H1 (cell line): ENCODE measurements at regions of chr10 and their contacts with region 1.

Region 1: DNA sequence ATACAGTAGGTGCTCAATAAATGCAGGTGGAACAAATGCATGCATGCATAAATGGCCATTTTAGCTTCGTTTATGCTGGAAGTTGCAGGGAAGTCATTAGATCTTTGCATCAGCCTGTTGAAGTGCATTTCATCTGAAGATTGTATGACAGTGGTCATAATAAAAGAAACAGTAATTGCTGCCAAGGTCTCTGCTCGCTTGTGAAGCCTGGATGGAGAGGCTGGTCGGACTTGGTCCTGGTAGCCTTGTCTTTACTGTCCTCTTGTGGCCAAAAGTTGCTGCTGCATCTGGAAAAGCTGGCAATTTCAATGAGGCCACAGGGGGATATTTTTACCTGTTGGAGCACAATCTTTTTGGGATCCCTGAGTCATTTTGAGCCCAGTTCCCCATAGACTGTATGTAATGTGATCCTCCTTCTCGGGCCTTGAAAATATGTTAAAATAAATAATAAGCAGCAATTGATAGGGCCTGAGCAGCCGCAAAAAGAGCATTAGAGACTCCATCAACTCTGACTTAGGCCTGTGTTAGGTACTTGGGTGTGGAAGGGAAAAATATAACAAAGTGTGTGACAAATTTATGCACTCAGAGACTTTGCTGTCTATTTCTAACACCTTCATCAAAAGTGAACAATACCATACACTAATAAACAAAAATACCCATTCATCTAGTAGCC is 31.6 kb upstream of the HABP2 start:
- DNase-seq: peak in 1 of 2 experiments; percentile 75
- H3K4me3 ChIP-seq: no peak overlapping the region
- H3K27ac ChIP-seq: no peak overlapping the region
- H3K4me1 ChIP-seq: no peaks in the 10 kb centered on the region
- H3K27me3 ChIP-seq: no peaks in the 10 kb centered on the region; a peak in 1 of 7 replicates
- CTCF ChIP-seq: peak; percentile 79 to 98 (median 96)
- EP300 ChIP-seq: no peak
- POLR2A ChIP-seq: no peak
- RAD21 ChIP-seq: peak; percentile 97 to 98

Region 2: GRCh38 chr10:113322843-113323242 is 198.4 kb before region 1 on chr10:
- CTCF ChIA-PET with region 1: no interaction called
- POLR2A ChIA-PET with region 1: no interaction called
- DNase-seq: no peak
- H3K4me3 ChIP-seq: no peak overlapping the region
- H3K27ac ChIP-seq: no peak overlapping the region
- H3K4me1 ChIP-seq: peaks cover 2 to 11% (median 8%) of the 10 kb centered on the region in 4 experiments; a peak in 5 of 7 replicates
- H3K27me3 ChIP-seq: no peaks in the 10 kb centered on the region
- CTCF ChIP-seq: no peak
- EP300 ChIP-seq: no peak
- POLR2A ChIP-seq: no peak
- RAD21 ChIP-seq: no peak

Region 3: DNA sequence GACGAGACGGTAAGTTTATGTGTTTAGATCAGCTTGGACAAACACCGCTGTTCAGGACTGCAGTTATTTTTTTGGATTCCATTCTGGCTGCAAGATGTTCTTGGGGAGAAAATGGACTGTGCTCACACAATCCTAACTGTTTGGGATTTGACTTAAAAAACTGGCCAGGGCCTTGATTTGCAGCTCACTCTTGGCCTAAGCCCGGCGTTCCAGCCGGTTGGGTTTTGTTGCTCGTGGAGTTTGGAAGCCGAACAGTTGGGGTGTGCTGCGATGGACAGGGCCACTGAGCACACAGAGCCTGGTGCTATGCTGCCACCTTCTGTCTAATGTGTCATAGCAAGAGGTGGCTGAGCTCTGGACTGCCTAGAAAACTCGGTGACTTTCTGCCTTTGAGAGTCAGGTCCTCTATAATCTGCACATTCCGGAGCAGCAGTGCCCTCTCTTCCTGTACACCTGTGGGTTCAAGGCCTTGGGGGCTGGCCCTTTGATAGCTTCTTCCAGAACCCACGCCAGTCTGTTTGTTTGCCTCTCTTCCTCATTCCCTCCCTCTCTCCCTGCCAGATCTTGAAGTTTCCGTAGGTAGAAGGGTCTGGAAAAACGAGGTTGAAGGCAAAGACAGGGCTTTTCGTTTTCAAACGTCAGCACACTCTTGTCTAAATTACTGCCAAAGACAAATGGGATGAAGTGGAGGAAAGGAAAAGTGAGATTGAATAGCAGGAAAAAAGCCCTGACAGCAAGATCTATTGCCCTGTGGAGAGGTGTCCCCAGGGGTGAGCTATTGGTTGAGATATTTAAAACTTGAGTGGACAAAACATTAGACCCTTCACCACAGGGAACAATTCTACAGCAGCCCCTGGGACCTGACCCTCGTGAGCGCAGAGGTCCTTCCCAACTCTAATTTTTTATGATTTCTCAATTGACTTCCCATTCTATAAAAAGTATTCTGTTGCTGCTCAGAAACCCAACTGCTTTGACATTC is 135.9 kb before region 1 on chr10:
- CTCF ChIA-PET with region 1: interaction called, 22 read pairs
- POLR2A ChIA-PET with region 1: no interaction called
- DNase-seq: peak; percentile 65 to 71
- H3K4me3 ChIP-seq: no peak overlapping the region
- H3K27ac ChIP-seq: no peak overlapping the region
- H3K4me1 ChIP-seq: no peaks in the 10 kb centered on the region
- H3K27me3 ChIP-seq: no peaks in the 10 kb centered on the region
- CTCF ChIP-seq: peak; percentile 80 to 93 (median 86)
- EP300 ChIP-seq: no peak
- POLR2A ChIP-seq: no peak
- RAD21 ChIP-seq: peak; percentile 98 to 99

Region 4: DNA sequence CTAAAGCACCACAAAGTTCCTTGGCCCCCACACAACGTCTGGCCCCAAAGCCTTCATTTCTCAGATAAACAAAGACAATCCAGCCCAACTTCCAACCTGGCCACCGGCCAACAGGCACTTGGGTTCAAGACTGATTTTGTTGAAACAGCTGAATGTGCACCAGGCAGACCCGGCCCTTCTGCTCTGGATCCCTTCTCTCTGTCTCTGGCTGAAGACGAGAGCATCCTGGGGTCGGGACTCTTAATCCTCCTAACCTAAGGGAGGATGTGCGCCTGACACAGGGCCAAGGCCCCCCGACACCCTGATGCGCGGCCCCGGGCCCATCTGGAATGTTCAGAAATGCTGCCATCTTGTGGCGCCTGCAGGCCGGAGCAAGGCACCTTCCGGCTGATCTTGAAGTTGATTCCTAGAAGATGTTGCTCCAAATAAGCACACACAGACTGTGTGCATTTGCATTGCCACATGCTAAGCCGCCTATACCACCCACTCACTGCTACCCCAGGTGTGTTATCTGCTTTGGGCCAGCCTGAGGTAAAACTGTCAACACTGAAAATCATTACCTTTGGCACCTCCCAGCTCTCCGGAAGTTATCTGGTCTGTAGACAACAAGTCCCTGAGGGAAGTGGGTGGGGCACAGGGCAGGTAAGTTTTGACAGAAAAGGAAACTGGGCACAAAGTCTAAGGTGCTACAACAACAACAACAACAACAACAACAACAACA is 66.8 kb before region 1 on chr10:
- CTCF ChIA-PET with region 1: interaction called, 35 read pairs
- POLR2A ChIA-PET with region 1: no interaction called
- DNase-seq: peak; percentile 33 to 88
- H3K4me3 ChIP-seq: no peak overlapping the region
- H3K27ac ChIP-seq: no peak overlapping the region
- H3K4me1 ChIP-seq: 0 out of 7 replicates have a peak, but pooled peaks cover 0 to 3% (median 0%) of the 10 kb centered on the region in 4 experiments
- H3K27me3 ChIP-seq: no peaks in the 10 kb centered on the region
- CTCF ChIP-seq: peak; percentile 77 to 89 (median 81)
- EP300 ChIP-seq: no peak
- POLR2A ChIP-seq: no peak
- RAD21 ChIP-seq: peak; percentile 88 to 89

Region 5: GRCh38 chr10:113503930-113504329 is 17.3 kb before region 1 on chr10:
- CTCF ChIA-PET with region 1: interaction called, 23 read pairs
- POLR2A ChIA-PET with region 1: no interaction called
- DNase-seq: no peak
- H3K4me3 ChIP-seq: no peak overlapping the region
- H3K27ac ChIP-seq: no peak overlapping the region
- H3K4me1 ChIP-seq: no peaks in the 10 kb centered on the region
- H3K27me3 ChIP-seq: peaks cover 0 to 1% (median 0%) of the 10 kb centered on the region in 4 experiments; a peak in 1 of 7 replicates
- CTCF ChIP-seq: no peak
- EP300 ChIP-seq: no peak
- POLR2A ChIP-seq: no peak
- RAD21 ChIP-seq: no peak

Region 6: DNA sequence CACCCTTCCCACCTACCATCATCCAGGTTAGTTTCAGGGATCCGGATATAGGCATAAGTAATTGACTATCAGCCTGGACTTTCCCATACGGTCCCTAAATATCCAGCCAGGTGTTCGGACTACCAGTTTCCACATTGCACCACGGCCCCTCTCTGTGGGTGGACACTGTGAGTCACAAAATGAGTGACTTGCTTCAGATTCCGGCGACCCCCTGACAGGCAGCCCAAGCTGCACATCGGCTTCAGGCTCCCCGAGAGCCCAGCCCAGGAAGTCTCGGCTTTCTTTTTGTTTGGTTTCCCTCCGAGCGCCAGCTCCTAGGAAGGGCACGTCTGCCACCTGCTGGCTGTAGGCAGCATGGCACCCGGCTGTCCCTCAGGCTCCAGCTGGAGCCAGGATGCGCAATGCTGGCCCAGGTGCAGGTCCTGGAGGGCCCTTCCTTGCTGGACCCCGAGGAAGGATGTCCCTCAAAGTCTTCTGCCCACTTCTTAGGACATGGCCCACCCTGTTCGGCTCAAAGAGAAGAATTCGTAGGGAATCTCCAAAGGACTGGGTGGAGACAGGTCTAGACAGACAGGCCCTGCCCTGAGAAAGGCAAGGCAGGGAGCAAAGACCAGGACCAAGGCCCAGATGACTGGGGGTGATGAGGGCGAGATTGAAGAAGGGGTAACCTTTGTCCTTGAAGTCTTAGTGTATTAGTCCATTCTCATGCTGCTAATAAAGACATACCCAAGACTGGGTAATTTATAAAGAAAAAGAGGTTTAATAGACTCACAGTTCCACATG is 42.2 kb after region 1 on chr10:
- CTCF ChIA-PET with region 1: interaction called, 57 read pairs
- POLR2A ChIA-PET with region 1: no interaction called
- DNase-seq: peak; percentile 47 to 91
- H3K4me3 ChIP-seq: no peak overlapping the region
- H3K27ac ChIP-seq: no peak overlapping the region
- H3K4me1 ChIP-seq: peaks cover 2 to 13% (median 9%) of the 10 kb centered on the region in 4 experiments; a peak in 6 of 7 replicates
- H3K27me3 ChIP-seq: peaks cover 44 to 53% (median 47%) of the 10 kb centered on the region in 4 experiments
- CTCF ChIP-seq: peak; percentile 95 to 97 (median 97)
- EP300 ChIP-seq: no peak
- POLR2A ChIP-seq: no peak
- RAD21 ChIP-seq: peak; percentile 97 to 98

Region 7: DNA sequence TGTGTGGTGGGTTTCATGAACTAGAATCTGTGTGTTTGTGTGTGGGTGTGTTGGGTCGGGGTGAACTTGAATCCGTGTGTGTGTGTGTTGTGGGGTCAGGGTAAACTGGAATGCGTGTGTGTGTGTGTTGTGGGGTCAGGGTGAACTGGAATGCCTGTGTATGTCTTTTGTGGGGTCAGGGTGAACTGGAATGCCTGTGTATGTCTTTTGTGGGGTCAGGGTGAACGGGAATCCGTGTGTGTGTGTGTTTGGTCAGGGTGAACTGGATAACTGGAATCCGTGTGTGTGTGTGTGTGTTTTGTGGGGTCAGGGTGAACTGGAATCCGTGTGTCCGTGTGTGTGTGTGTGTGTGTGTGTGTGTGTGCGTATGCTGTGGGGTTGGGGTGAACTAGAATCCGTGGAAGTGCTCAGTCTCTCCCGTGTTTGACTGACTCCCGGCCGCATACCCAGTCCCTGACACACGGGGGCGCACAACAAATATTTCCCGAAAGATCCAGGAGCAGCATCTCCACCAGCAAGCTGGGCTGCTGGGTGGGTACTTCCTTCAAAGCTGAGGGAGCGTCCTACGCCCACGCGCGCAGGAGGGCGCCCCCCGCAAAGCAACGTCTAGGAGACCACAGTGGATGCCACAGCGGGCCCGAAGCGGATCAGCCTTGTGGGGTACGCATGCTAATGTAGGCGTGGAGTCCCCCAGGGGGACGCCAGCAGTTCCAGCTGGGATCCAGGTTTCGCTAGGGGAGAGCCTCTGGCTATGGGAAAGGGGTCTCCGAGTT is 157.6 kb after region 1 on chr10:
- CTCF ChIA-PET with region 1: no interaction called
- POLR2A ChIA-PET with region 1: no interaction called
- DNase-seq: peak in 1 of 2 experiments; percentile 89
- H3K4me3 ChIP-seq: peak overlapping the region; percentile 83 to 93 (median 90)
- H3K27ac ChIP-seq: no peak overlapping the region
- H3K4me1 ChIP-seq: peaks cover 0 to 5% (median 2%) of the 10 kb centered on the region in 4 experiments; a peak in 2 of 7 replicates
- H3K27me3 ChIP-seq: peaks cover 0 to 9% (median 7%) of the 10 kb centered on the region in 4 experiments; a peak in 3 of 7 replicates
- CTCF ChIP-seq: peak; percentile 63 to 78 (median 73)
- EP300 ChIP-seq: no peak
- POLR2A ChIP-seq: no peak
- RAD21 ChIP-seq: peak; percentile 9 to 43; a peak in 2 of 4 replicates

Region 8: DNA sequence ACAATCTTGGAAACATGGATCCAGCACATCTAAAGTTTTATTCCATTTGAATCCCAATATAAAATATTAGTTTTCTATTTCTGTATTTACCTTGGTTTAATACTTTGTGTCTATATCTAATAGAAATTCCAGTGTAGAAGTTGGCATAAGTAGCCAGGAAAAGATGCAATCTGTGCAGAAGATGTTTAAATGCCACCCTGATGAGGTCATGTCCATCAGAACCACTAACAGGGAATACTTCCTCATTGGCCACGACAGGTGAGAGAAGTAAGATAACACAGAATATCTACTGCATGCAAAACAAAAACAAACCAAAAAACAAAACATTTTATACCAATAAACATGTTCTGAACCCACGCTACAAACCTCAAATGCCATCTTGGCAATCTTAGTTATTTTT is 246.0 kb after region 1 on chr10:
- CTCF ChIA-PET with region 1: no interaction called
- POLR2A ChIA-PET with region 1: no interaction called
- DNase-seq: no peak
- H3K4me3 ChIP-seq: no peak overlapping the region
- H3K27ac ChIP-seq: no peak overlapping the region
- H3K4me1 ChIP-seq: no peaks in the 10 kb centered on the region
- H3K27me3 ChIP-seq: no peaks in the 10 kb centered on the region
- CTCF ChIP-seq: no peak
- EP300 ChIP-seq: no peak
- POLR2A ChIP-seq: no peak
- RAD21 ChIP-seq: no peak